Activated CD4-positive, alpha-beta T cell treated with anti-CD3 and anti-CD28 coated beads, Interleukin-2, amount 10 ng/mL, durations not matched to agents 24 days and 14 days (primary cell): ENCODE measurements at regions of chr1 and their contacts with region 1.

Region 1: DNA sequence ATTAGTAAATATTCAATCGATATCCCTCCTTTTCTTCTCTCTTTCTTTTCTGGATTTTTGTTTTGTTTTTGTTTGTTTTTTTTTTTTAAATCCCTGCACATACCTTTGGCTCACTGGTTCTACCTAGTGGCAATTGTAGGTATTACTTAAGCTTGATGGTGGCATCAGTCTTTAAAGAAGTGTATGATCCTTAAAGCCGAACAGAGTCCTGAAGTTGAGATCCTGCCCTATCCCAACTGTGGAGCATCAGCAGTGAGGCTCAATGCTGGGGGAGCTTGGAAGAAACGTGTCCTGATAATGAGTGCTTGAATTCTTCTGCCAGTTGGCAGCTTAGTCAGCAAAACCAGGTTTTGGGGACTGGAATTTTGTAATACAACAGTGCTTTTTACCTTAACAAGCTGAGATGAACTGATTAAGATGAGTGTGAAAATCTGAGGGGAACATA is 60.8 kb downstream of the FASLG start:
- DNase-seq: peak; percentile 79
- H3K4me3 Mint-ChIP-seq: no peak overlapping the region
- H3K27ac Mint-ChIP-seq: peak overlapping the region; percentile 35
- H3K4me1 Mint-ChIP-seq: peaks cover 42% of the 10 kb centered on the region
- H3K27me3 Mint-ChIP-seq: no peaks in the 10 kb centered on the region

Region 2: DNA sequence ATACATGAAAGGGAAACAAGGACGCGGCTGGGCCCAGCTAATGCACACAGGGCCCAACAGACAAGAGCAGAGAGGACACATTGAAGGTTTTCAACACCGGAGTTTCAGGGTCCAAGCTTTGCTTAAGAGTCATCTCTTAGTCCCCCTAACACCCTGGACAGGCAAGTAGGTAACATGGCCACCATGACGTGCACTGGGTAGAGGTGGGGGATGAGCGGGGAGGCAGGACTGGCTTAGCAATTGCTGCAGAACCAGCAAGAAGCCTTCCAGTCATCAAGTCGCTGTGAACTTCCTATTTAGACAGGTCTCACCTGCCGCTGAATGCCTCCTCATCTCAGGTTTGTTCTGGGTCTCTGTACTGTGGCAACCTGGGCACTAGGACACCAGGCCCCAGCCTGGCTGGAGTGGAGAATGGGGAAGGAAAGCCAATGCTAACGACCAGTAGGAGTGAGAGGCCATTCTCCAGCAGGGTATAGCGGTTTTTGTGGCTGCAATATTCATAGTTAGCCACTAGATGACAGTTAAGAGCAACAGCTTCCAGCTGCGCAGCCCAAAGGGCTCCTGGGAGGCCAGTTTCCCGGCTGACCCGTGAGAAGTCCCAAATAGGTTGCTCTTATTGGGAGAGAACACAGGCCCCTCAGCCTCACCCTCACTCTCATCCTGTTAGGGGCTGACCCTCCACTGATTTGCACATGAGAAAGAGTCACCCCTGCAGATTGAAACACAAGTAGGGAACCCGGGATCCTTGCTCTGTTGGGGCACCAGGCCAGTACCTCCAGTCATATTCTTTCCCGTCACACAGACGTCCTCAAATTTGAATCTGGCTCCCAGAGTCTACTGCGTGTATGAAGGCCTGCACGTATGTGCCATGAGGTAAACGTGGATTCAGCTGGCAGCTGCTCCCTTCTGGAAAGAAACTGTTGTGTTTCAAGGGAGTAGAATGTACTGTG is 269.9 kb before region 1 on chr1:
- intact Hi-C with region 1: loop called (anchors 2 kb)
- DNase-seq: peak; percentile 83
- H3K4me3 Mint-ChIP-seq: peak overlapping the region; percentile 39
- H3K27ac Mint-ChIP-seq: peak overlapping the region; percentile 65
- H3K4me1 Mint-ChIP-seq: peaks cover 27% of the 10 kb centered on the region
- H3K27me3 Mint-ChIP-seq: peaks cover 1% of the 10 kb centered on the region

Region 3: DNA sequence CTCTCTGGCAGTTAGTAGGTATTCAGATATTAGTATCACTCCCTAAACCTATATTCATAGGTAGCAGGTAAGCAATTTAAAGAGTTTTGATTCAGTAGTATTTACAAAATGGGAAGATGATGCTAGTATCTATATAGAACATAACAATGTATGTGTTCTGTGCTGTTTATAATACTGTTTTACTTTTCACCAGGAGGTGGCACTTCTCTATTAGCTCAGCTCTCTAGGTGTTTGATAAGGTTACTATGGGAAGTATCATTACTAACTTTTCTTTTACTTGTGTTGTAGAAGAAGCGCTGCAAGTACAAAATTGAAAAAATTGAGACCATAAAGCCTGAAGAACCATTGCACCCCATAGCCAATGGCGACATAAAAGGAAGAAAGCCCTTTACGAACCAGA is 110.2 kb before region 1 on chr1:
- intact Hi-C with region 1: loop called (anchors 1 kb)
- DNase-seq: no peak
- H3K4me3 Mint-ChIP-seq: no peak overlapping the region
- H3K27ac Mint-ChIP-seq: no peak overlapping the region
- H3K4me1 Mint-ChIP-seq: peaks cover 13% of the 10 kb centered on the region
- H3K27me3 Mint-ChIP-seq: no peaks in the 10 kb centered on the region

Region 4: GRCh38 chr1:172671591-172671990 is 48.1 kb before region 1 on chr1:
- intact Hi-C with region 1: loop called (anchors 1 kb)
- DNase-seq: no peak
- H3K4me3 Mint-ChIP-seq: peak overlapping the region; percentile 24
- H3K27ac Mint-ChIP-seq: no peak overlapping the region
- H3K4me1 Mint-ChIP-seq: peaks cover 79% of the 10 kb centered on the region
- H3K27me3 Mint-ChIP-seq: no peaks in the 10 kb centered on the region

Region 5: GRCh38 chr1:172699111-172699510 is 20.6 kb before region 1 on chr1:
- intact Hi-C with region 1: loop called (anchors 1 kb)
- DNase-seq: peak; percentile 92
- H3K4me3 Mint-ChIP-seq: peak overlapping the region; percentile 82
- H3K27ac Mint-ChIP-seq: peak overlapping the region; percentile 90
- H3K4me1 Mint-ChIP-seq: peaks cover 49% of the 10 kb centered on the region
- H3K27me3 Mint-ChIP-seq: no peaks in the 10 kb centered on the region

Region 6: GRCh38 chr1:172708452-172708851 is 11.3 kb before region 1 on chr1:
- intact Hi-C with region 1: loop called (anchors 1 kb)
- DNase-seq: peak; percentile 87
- H3K4me3 Mint-ChIP-seq: peak overlapping the region; percentile 56
- H3K27ac Mint-ChIP-seq: peak overlapping the region; percentile 88
- H3K4me1 Mint-ChIP-seq: peaks cover 49% of the 10 kb centered on the region
- H3K27me3 Mint-ChIP-seq: peaks cover 2% of the 10 kb centered on the region